GM12878 (cell line): ENCODE measurements at regions of chr7 and their contacts with region 1.

Region 1: DNA sequence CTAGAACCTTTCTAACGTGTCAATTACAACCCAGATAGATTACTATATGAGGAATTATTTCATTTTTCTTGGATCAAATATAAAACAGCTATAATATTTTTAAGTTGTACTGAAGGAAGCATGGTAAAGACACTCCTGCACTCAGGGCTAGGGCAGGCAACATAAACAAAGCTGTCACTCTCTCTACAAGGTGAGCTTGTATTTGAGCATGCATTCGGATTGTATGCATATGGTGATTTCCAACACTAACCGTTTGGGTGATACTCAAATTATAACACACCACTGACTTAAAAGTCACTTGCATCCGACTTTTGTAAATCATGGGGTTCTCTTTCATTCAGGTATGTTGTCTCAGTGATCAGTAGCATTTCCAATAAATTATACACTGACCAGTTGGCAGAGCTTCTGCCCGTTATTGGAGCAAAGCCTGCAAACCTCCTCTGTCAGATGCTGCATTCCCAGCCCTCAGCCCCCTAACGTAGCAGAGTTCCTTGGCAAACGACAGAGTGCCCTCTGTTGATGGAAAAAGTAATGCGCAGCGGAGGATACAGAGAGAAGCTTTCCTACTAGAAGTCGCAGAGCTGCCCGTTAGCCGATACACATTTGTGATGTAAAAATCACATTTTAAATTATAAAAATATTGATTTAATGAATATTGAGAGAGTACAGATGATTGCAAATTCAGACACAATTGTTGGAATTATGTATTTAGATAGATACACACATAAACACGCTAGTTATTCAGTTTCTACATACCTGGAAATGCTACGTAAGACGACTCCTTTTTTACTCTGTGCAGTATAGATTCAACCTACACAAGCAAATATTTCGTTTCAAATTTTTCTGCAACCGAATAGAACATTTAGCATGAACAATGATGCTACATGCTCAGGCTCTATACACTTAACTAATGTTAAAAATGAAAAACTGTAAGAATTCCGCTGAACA is 173.9 kb upstream of the SP4 start:
- DNase-seq: no peak
- ATAC-seq: peak; percentile 91
- H3K4me3 ChIP-seq: no peak overlapping the region
- H3K27ac ChIP-seq: no peak overlapping the region
- H3K4me1 ChIP-seq: no peaks in the 10 kb centered on the region
- H3K27me3 ChIP-seq: peaks cover 0 to 10% of the 10 kb centered on the region in 2 experiments; a peak in 2 of 4 replicates
- CTCF ChIP-seq: peak; percentile 63 to 66 (median 66)
- EP300 ChIP-seq: no peak
- POLR2A ChIP-seq: no peak
- RAD21 ChIP-seq: peak; percentile 66

Region 2: GRCh38 chr7:19747740-19748339 is 1506.2 kb before region 1 on chr7:
- CTCF ChIA-PET with region 1: interaction called, 6 read pairs
- POLR2A ChIA-PET with region 1: no interaction called
- RAD21 ChIA-PET with region 1: interaction called, 5 read pairs
- SMC1A ChIA-PET with region 1: interaction called, 3 read pairs
- in situ Hi-C with region 1: loop called (anchors 10 kb)
- intact Hi-C with region 1: loop called (anchors 10 kb)
- DNase-seq: no peak
- ATAC-seq: peak; percentile 76
- H3K4me3 ChIP-seq: no peak overlapping the region
- H3K27ac ChIP-seq: no peak overlapping the region
- H3K4me1 ChIP-seq: no peaks in the 10 kb centered on the region
- H3K27me3 ChIP-seq: no peaks in the 10 kb centered on the region
- CTCF ChIP-seq: peak; percentile 47 to 61 (median 47); a peak in 5 of 6 replicates
- EP300 ChIP-seq: no peak
- POLR2A ChIP-seq: no peak
- RAD21 ChIP-seq: peak; percentile 63

Region 3: DNA sequence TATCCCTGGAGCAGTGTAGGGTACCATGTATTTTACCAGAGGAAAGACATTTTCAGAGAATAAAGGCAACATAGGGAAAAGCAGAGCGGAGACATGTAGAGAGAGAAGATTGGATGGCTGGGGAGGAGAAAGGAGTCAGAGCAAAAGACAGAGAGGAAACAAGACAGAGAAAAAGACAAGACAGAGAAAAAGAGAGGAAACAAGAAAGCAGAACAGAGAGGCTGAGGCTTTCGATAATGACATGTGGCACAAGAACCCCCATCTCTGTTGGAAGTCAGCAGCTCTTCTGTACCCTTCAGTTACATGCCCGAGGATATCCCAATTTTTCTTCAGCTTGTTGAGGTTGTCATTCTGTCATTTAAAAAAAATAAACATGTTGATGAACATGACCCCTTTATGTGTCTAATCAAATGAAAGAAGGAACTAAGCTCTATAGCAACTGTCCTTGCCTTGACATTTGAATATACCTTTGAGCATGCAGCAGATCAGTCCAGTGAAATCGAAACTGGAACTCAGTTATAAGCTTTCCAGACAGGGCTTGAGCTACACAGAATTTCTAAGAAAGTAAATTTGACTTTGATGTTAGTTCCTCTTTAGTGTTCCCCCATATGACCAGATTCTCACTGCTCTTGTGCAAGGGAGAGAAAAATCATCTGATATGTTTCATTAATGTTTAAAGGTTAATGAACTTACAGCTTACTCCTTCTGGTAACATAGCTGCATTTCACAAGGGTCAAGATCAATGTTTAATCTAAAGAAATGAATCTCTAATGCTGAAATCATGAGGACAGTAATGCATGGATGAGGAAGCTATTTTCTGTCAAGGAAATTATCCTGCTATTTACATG is 98.8 kb after region 1 on chr7:
- CTCF ChIA-PET with region 1: interaction called, 5 read pairs
- POLR2A ChIA-PET with region 1: interaction called, 4 read pairs
- RAD21 ChIA-PET with region 1: interaction called, 10 read pairs
- SMC1A ChIA-PET with region 1: interaction called, 13 read pairs
- in situ Hi-C with region 1: no loop called
- intact Hi-C with region 1: no loop called
- DNase-seq: peak; percentile 93
- ATAC-seq: peak; percentile 86
- H3K4me3 ChIP-seq: peak overlapping the region; percentile 43
- H3K27ac ChIP-seq: peak overlapping the region; percentile 85
- H3K4me1 ChIP-seq: peaks cover 38% of the 10 kb centered on the region
- H3K27me3 ChIP-seq: no peaks in the 10 kb centered on the region
- CTCF ChIP-seq: no peak
- EP300 ChIP-seq: peak; percentile 23 to 83; a peak in 3 of 4 replicates
- POLR2A ChIP-seq: no peak
- RAD21 ChIP-seq: peak; percentile 30; the same call in 1 of the 2 replicates

Region 4: DNA sequence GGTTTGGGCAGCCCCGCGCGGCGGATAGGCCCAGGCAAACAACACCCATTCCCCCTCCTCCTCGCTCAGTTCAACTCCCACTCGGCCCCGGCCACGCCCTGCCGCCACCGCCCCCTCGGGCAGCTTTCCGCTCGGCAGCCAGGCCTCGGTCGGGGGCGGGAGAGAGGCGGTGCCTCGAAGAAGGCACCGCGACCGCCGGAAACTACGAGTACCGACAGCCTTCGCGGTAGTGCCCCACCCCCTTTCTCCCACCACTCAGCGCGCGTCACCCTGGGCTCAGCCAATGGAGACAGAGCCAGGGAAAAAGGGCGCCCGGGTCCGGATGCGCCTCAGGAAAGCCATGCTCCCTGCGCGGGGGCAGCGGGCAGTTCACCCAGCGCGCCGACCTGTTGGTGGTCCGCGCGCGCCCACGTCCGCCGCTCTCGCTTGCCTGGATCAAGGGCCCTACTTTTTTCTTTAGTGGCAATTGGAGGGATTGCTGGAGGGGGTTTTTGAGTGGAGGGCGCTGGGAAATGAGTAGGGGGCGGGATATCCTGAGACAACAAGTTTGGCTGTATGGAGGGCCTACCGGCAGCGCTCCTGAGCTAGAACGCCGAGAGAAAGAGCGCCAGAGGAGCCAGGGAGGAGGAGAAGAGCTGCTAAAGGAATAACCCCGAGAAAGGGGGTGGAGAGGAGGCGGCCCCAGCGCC is 173.3 kb after region 1 on chr7:
- CTCF ChIA-PET with region 1: interaction called, 3 read pairs
- POLR2A ChIA-PET with region 1: no interaction called
- RAD21 ChIA-PET with region 1: interaction called, 3 read pairs
- SMC1A ChIA-PET with region 1: interaction called, 5 read pairs
- in situ Hi-C with region 1: no loop called
- intact Hi-C with region 1: loop called (anchors 2 kb)
- DNase-seq: peak; percentile 92
- ATAC-seq: peak; percentile 87
- H3K4me3 ChIP-seq: peak overlapping the region; percentile 93
- H3K27ac ChIP-seq: peak overlapping the region; percentile 97
- H3K4me1 ChIP-seq: peaks cover 15% of the 10 kb centered on the region
- H3K27me3 ChIP-seq: no peaks in the 10 kb centered on the region
- CTCF ChIP-seq: peak in 2 of 3 experiments; percentile 3 to 15; a peak in 1 of 6 replicates
- EP300 ChIP-seq: 0 out of 4 replicates have a peak, but pooled peaks have one; percentile 0 to 34
- POLR2A ChIP-seq: peak; percentile 67
- RAD21 ChIP-seq: no peak

Region 5: DNA sequence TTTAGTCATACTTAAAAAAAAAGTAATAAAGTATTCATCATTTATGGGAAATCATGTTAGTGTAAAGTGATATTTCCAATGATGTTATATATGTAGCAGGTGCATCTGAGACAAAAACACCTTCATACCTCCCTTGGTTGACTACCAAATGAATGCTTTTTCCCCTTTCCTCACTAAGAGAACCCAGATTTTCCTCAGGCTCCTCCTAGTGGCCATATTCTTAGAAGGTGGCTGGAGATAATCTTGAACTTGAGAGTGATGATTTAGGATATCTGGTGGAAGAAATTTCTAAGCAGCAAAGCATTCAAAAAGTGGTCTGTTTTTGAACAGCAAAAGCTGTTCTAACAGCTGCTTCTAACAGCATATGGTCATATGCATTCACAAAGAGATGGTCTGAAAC is 272.0 kb after region 1 on chr7:
- CTCF ChIA-PET with region 1: interaction called, 21 read pairs
- POLR2A ChIA-PET with region 1: no interaction called
- RAD21 ChIA-PET with region 1: interaction called, 5 read pairs
- SMC1A ChIA-PET with region 1: interaction called, 8 read pairs
- in situ Hi-C with region 1: no loop called
- intact Hi-C with region 1: loop called (anchors 1 kb)
- DNase-seq: no peak
- ATAC-seq: no peak
- H3K4me3 ChIP-seq: no peak overlapping the region
- H3K27ac ChIP-seq: no peak overlapping the region
- H3K4me1 ChIP-seq: no peaks in the 10 kb centered on the region
- H3K27me3 ChIP-seq: no peaks in the 10 kb centered on the region
- CTCF ChIP-seq: peak; percentile 26 to 40 (median 40); a peak in 4 of 6 replicates
- EP300 ChIP-seq: no peak
- POLR2A ChIP-seq: no peak
- RAD21 ChIP-seq: peak; percentile 49

Region 6: DNA sequence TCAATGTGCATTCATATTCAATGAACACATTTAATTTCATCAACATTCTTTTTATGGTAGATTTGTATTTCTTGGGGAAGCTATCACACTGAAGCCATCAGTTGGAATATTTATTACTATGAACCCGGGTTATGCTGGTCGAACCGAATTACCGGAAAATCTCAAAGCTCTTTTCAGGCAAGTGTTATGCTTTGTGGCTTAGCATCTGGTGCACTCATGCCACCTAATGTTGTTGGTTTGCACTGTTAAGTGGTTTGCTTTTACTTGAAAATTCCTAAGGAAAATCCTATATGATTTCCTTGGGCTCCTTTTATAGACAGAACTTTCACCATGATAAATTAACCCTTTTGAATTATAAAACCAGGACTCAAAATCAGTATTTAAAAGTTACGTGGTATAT is 436.7 kb after region 1 on chr7:
- CTCF ChIA-PET with region 1: interaction called, 12 read pairs
- POLR2A ChIA-PET with region 1: no interaction called
- RAD21 ChIA-PET with region 1: interaction called, 6 read pairs
- SMC1A ChIA-PET with region 1: interaction called, 4 read pairs
- in situ Hi-C with region 1: no loop called
- intact Hi-C with region 1: no loop called
- DNase-seq: no peak
- ATAC-seq: no peak
- H3K4me3 ChIP-seq: no peak overlapping the region
- H3K27ac ChIP-seq: no peak overlapping the region
- H3K4me1 ChIP-seq: no peaks in the 10 kb centered on the region
- H3K27me3 ChIP-seq: no peaks in the 10 kb centered on the region
- CTCF ChIP-seq: no peak
- EP300 ChIP-seq: no peak
- POLR2A ChIP-seq: no peak
- RAD21 ChIP-seq: peak; percentile 42; the same call in 1 of the 2 replicates

Region 7: GRCh38 chr7:21718391-21718790 is 464.4 kb after region 1 on chr7:
- CTCF ChIA-PET with region 1: no interaction called
- POLR2A ChIA-PET with region 1: no interaction called
- RAD21 ChIA-PET with region 1: no interaction called
- SMC1A ChIA-PET with region 1: no interaction called
- in situ Hi-C with region 1: no loop called
- intact Hi-C with region 1: no loop called
- DNase-seq: no peak
- ATAC-seq: no peak
- H3K4me3 ChIP-seq: no peak overlapping the region
- H3K27ac ChIP-seq: no peak overlapping the region
- H3K4me1 ChIP-seq: no peaks in the 10 kb centered on the region
- H3K27me3 ChIP-seq: no peaks in the 10 kb centered on the region
- CTCF ChIP-seq: no peak
- EP300 ChIP-seq: no peak
- POLR2A ChIP-seq: no peak
- RAD21 ChIP-seq: no peak

Region 8: DNA sequence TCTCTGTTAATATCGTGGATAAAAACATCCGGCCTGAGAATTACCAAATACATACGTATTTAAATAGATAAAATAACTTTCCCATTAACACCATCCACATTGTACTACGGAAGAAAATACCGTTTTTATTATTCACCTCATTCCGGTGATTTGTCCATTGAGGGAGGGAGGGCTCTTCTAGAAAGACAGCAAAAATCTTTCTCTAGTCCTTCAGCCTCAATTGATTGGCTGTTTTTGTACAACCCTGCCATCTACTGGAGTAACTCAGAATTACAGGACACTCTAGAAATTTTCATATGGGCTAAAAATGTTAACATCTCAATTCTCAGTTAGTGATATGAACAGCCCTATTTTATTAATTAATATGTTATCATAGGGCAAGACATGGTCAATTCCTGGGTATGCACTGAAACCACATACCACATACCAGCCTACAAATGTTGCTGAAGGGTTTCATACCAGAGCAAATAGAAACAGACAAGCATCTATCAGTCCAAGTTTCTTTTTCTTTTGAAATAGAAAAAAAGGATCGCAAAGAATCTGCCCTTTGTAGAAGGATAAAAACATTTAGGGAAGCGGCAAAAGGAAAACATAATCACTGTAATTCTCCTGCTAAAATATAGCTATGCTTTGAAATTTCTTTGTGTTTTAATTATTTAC is 747.5 kb after region 1 on chr7:
- CTCF ChIA-PET with region 1: interaction called, 5 read pairs
- POLR2A ChIA-PET with region 1: no interaction called
- RAD21 ChIA-PET with region 1: interaction called, 3 read pairs
- SMC1A ChIA-PET with region 1: interaction called, 18 read pairs
- in situ Hi-C with region 1: loop called (anchors 10 kb)
- intact Hi-C with region 1: loop called (anchors 1 kb)
- DNase-seq: peak; percentile 13
- ATAC-seq: peak; percentile 80
- H3K4me3 ChIP-seq: no peak overlapping the region
- H3K27ac ChIP-seq: no peak overlapping the region
- H3K4me1 ChIP-seq: no peaks in the 10 kb centered on the region
- H3K27me3 ChIP-seq: 0 out of 4 replicates have a peak, but pooled peaks cover 0 to 1% of the 10 kb centered on the region in 2 experiments
- CTCF ChIP-seq: peak; percentile 58 to 83 (median 70)
- EP300 ChIP-seq: no peak
- POLR2A ChIP-seq: no peak
- RAD21 ChIP-seq: peak; percentile 95